Sciatic nerve (tissue), 2 donors: ENCODE measurements at regions of chr11 and their contacts with region 1.

Region 1: DNA sequence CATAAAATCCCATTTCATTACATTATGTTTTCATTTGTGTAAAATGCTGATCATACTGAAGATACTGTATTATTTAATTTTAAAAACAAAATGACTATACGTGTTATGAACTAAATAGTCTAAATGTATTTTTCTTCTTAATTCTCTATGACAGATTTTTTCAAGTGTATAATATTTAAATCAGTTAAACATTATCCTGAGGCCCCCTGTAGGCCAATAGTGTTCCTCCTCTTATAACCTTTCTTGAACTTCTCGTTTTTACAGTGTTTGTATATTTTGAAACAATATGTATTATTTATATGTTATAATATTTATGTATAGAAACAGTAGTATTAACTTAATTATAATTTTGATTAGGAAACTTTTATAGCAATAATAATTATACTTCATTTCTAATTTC is 151.1 kb upstream of the CHORDC1 start:
- DNase-seq: no peak
- ATAC-seq: no peak

Region 2: GRCh38 chr11:90204832-90205646 is 168.9 kb before region 1 on chr11:
- intact Hi-C with region 1: no loop called
- DNase-seq: no peak
- ATAC-seq: no peak

Region 3: GRCh38 chr11:90343673-90344072 is 30.3 kb before region 1 on chr11:
- intact Hi-C with region 1: no loop called
- DNase-seq: no peak
- ATAC-seq: no peak

Region 4: GRCh38 chr11:91536366-91536765 is 1162.4 kb after region 1 on chr11:
- intact Hi-C with region 1: loop called (anchors 10 kb)
- DNase-seq: no peak
- ATAC-seq: no peak

Region 5: GRCh38 chr11:92122561-92122960 is 1748.6 kb after region 1 on chr11:
- intact Hi-C with region 1: no loop called
- DNase-seq: no peak
- ATAC-seq: no peak